Calu3 (cell line): ENCODE measurements at regions of chr19 and their contacts with region 1.

Region 1: DNA sequence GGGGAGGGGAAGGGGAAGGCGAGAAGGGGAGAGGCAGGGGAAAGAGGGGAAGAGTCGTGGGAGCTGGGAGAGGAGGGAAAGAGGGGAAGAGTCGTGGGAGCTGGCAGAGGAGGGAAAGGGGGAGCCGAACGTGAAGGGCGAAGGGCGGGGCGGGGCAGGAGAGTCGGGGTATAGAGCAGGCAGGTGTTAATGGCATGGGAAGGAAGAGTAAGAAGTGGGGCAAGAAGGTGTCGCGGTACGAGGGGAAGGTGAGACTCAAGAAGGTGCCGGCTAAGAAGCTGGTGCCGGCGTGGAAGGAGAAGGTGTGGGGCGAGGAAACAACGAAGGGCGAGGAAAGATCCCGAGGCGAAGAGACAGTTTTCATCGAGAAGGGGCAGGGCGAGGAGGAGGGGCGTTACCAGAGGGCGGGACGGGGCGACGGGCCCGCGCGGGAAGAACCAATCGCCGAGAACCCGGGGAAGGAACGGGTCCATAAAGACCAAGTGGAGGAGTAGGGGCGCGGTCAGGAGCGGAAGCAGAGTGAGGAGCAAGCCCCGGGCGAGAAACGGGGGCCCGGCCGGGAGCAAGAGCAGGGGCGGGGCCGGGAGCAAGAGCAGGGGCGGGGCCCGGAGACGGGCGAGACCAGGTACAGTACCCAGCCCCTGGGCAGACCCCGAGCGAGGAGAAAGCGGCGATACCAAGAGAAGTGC is 463 bp downstream of the CATSPERG start:
- DNase-seq: peak; percentile 99
- H3K4me3 Mint-ChIP-seq: peak overlapping the region; percentile 88
- H3K27ac Mint-ChIP-seq: peak overlapping the region; percentile 79
- H3K4me1 Mint-ChIP-seq: peaks cover 19% of the 10 kb centered on the region
- H3K27me3 Mint-ChIP-seq: no peaks in the 10 kb centered on the region
- CTCF ChIP-seq: no peak

Region 2: DNA sequence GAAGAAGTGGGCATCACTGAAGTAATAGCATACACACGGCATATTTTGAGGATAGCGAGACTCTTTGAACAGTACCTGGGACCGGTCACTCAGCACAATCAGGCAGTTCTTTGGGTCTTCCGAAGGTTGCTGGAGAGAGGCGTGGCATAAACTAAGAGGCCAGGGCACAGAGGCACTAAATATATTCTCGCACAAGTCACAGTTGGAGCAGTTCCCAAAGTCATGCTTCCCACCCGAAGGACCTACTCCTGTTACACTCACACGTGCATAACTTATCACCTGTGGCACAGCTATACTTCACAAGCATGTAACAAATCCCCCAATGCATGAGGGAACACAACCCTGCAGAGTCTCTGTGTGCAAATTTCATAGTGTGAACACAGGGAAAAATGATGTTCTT is 439.9 kb before region 1 on chr19:
- CTCF ChIA-PET with region 1: no interaction called
- intact Hi-C with region 1: loop called (anchors 5 kb)
- DNase-seq: no peak
- H3K4me3 Mint-ChIP-seq: no peak overlapping the region
- H3K27ac Mint-ChIP-seq: no peak overlapping the region
- H3K4me1 Mint-ChIP-seq: no peaks in the 10 kb centered on the region
- H3K27me3 Mint-ChIP-seq: peaks cover 41% of the 10 kb centered on the region
- CTCF ChIP-seq: no peak

Region 3: GRCh38 chr19:38233740-38234251 is 102.3 kb before region 1 on chr19:
- CTCF ChIA-PET with region 1: interaction called, 9 read pairs
- intact Hi-C with region 1: loop called (anchors 2 kb)
- DNase-seq: peak; percentile 92
- H3K4me3 Mint-ChIP-seq: no peak overlapping the region
- H3K27ac Mint-ChIP-seq: no peak overlapping the region
- H3K4me1 Mint-ChIP-seq: no peaks in the 10 kb centered on the region
- H3K27me3 Mint-ChIP-seq: peaks cover 53% of the 10 kb centered on the region
- CTCF ChIP-seq: peak; percentile 98

Region 4: DNA sequence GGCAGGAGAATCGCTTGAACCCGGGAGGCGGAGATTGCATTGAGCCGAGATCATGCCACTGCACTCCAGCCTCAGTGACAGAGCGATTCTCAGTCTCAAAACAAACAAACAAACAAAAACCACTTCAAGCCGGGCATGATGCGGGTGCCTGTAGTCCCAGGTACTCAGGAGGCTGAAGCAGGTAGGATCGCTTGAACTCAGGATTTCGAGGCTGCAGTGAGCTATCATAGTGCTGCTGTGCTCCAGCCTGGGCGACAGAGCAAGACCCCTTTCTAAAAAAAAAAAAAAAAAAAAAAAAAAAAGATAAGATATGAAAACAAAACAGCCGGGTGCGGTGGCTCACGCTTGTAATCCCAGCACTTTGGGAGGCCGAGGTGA is 92.8 kb before region 1 on chr19:
- CTCF ChIA-PET with region 1: interaction called, 22 read pairs
- intact Hi-C with region 1: loop called (anchors 1 kb)
- DNase-seq: no peak
- H3K4me3 Mint-ChIP-seq: peak overlapping the region; percentile 59
- H3K27ac Mint-ChIP-seq: peak overlapping the region; percentile 24
- H3K4me1 Mint-ChIP-seq: peaks cover 17% of the 10 kb centered on the region
- H3K27me3 Mint-ChIP-seq: peaks cover 22% of the 10 kb centered on the region
- CTCF ChIP-seq: no peak

Region 5: DNA sequence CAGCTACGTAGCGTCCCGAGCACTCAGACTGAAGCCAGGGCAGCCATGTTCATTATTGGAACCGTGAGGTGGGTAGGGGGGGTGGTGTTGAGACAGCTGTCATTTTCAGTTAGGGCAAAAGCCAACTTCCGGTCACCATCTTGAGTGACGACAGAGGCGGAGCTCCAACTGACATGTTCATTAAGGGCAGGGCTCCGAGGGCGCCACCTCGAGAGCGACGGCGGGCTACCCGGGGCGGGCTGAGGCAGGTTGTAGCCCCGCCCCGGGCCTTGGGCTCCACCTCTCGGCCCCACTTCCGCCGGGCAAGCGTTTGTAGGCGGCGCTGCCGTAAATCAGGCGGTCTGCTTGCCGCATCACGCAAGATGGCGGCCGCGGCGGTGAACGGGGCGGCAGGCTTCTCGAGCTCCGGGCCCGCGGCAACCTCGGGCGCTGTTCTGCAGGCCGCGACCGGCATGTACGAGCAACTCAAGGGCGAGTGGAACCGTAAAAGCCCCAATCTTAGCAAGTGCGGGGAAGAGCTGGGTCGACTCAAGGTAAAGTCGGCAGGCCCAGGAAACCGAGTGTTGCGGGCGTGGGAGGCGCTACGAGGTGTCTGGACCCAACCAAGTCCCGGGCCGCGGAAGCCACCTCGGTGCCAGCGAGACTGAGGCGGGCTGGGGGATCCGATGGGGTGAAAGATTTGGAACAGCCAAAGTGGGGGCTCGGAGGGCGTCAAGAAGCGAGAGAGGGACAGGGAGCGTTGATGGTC is 38.5 kb after region 1 on chr19 and contains the start of gene PSMD8:
- CTCF ChIA-PET with region 1: interaction called, 9 read pairs
- intact Hi-C with region 1: loop called (anchors 1 kb)
- DNase-seq: peak; percentile 99
- H3K4me3 Mint-ChIP-seq: peak within 1 kb of the TSS; percentile 97
- H3K27ac Mint-ChIP-seq: peak within 1 kb of the TSS; percentile 97
- H3K4me1 Mint-ChIP-seq: peaks cover 22% of the 10 kb centered on the region
- H3K27me3 Mint-ChIP-seq: peaks cover 26% of the 10 kb centered on the region
- CTCF ChIP-seq: peak; percentile 16
- total RNA-seq, gene PSMD8: 226 and 233 TPM in 2 replicates